ENCODE measurements at regions of chr4 and their contacts with region 1.

Region 1: DNA sequence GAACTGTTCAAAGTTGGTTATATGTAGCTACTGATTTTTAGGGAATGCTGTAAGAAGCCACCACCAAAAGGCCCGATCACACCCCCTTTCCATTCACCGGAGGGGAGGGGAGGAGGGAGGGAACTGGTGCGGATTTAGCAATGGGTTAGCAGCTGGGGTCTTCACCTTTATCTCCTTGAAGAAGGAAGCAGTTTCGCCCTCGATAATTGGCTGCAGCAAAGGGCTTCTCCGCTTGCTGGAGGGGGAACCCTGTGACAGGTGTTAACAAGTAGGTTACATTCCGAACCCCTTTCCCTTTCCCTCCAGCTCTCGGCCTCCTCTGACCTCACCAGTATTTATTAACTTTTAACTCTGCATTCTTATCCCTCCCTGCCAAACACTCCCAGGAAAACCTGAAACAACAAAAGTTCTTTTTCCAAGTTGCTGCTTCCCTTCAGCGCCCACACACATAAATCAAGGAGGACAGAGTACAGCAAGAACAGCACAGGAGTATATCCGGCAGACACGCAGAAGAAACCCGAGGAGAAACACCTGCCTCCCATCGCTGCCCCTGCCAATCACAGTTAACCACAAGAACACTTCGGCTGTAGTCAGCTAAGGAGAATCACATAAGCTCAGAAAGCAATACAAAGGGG is 39.8 kb upstream of the NAP1L5 start:
- DNase-seq: peak in 7 of 9 donors; percentile 54 to 74 (median 66)
- ATAC-seq: peak; percentile 90
- H3K4me3 ChIP-seq: no peak overlapping the region
- H3K4me3 Mint-ChIP-seq: peak overlapping the region in 9 of 10 donors; percentile 31 to 85 (median 76)
- H3K27ac ChIP-seq: peak overlapping the region; percentile 48
- H3K27ac Mint-ChIP-seq: peak overlapping the region in 8 of 9 donors; percentile 69 to 90 (median 85)
- H3K4me1 ChIP-seq: peaks cover 0 to 19% of the 10 kb centered on the region in 2 donors
- H3K4me1 Mint-ChIP-seq: peaks cover 9 to 49% (median 37%) of the 10 kb centered on the region in 7 donors
- H3K27me3 ChIP-seq: no peaks in the 10 kb centered on the region
- H3K27me3 Mint-ChIP-seq: no peaks in the 10 kb centered on the region

Region 2: GRCh38 chr4:88659055-88659889 is 78.2 kb before region 1 on chr4:
- CTCF ChIA-PET with region 1: no interaction called
- POLR2A ChIA-PET with region 1: interaction called, 11 read pairs
- intact Hi-C with region 1: no loop called
- DNase-seq: peak in 7 of 9 donors; percentile 23 to 53 (median 44)
- ATAC-seq: peak; percentile 75
- H3K4me3 ChIP-seq: no peak overlapping the region
- H3K4me3 Mint-ChIP-seq: no peak overlapping the region
- H3K27ac ChIP-seq: no peak overlapping the region
- H3K27ac Mint-ChIP-seq: peak overlapping the region in 6 of 9 donors; percentile 5 to 86 (median 41)
- H3K4me1 ChIP-seq: no peaks in the 10 kb centered on the region
- H3K4me1 Mint-ChIP-seq: peaks cover 8 to 39% (median 24%) of the 10 kb centered on the region in 7 donors
- H3K27me3 ChIP-seq: no peaks in the 10 kb centered on the region
- H3K27me3 Mint-ChIP-seq: no peaks in the 10 kb centered on the region

Region 3: GRCh38 chr4:88697588-88698329 is 39.7 kb before region 1 on chr4 and contains the start of gene NAP1L5:
- CTCF ChIA-PET with region 1: no interaction called
- POLR2A ChIA-PET with region 1: no interaction called
- intact Hi-C with region 1: loop called in 1 of 2 experiments (anchors 5 kb)
- DNase-seq: peak; percentile 57 to 88 (median 81)
- ATAC-seq: peak; percentile 95
- H3K4me3 ChIP-seq: peak within 1 kb of the TSS; percentile 68
- H3K4me3 Mint-ChIP-seq: peak within 1 kb of the TSS; percentile 82 to 92 (median 88)
- H3K27ac ChIP-seq: peak within 1 kb of the TSS; percentile 79
- H3K27ac Mint-ChIP-seq: peak within 1 kb of the TSS; percentile 79 to 96 (median 94)
- H3K4me1 ChIP-seq: peaks cover 0 to 13% of the 10 kb centered on the region in 2 donors
- H3K4me1 Mint-ChIP-seq: peaks cover 5 to 35% (median 22%) of the 10 kb centered on the region in 7 donors
- H3K27me3 ChIP-seq: no peaks in the 10 kb centered on the region
- H3K27me3 Mint-ChIP-seq: no peaks in the 10 kb centered on the region
- total RNA-seq, gene NAP1L5: 1.4 to 11.7 (median 4.5) TPM

Region 4: GRCh38 chr4:88964450-88964849 is 227.0 kb after region 1 on chr4:
- CTCF ChIA-PET with region 1: no interaction called
- POLR2A ChIA-PET with region 1: no interaction called
- intact Hi-C with region 1: no loop called
- DNase-seq: no peak
- ATAC-seq: peak; percentile 24
- H3K4me3 ChIP-seq: no peak overlapping the region
- H3K4me3 Mint-ChIP-seq: no peak overlapping the region
- H3K27ac ChIP-seq: no peak overlapping the region
- H3K27ac Mint-ChIP-seq: no peak overlapping the region
- H3K4me1 ChIP-seq: peaks cover 0 to 8% of the 10 kb centered on the region in 2 donors
- H3K4me1 Mint-ChIP-seq: peaks cover 0 to 25% (median 16%) of the 10 kb centered on the region in 7 donors
- H3K27me3 ChIP-seq: no peaks in the 10 kb centered on the region
- H3K27me3 Mint-ChIP-seq: peaks cover 0 to 11% (median 0%) of the 10 kb centered on the region in 5 donors

Measured in naive thymus-derived CD4-positive, alpha-beta T cell (primary cell).